ENCODE measurements at regions of chr7 and their contacts with region 1.

Region 1: DNA sequence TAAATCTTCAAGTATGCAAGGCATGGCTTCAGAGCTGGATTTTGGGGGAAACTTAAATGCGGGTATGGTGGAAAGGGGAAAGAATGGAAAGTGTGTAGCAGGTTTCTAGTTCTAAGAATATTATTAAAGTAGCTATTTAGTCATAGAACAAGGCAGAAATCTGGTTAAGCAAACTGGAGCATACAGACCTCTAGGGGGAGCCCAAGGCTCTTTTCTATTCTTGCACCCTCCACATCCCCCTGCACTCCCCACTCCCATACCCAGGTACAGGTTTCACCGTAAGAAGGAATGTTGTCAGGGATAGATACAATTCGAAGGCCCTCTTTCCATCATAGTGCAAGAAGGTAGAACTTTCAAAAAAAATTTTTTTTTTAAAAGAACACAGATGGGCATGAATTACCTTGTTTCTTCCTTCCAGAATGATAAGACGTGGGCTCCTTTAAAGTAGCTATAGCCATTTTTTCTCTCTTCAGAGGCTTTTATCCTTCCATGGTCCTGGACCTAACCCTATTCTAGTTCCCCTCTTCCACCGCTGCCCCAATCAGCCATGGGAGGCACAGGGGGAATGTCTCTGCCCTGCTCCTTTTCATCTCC is 41.5 kb upstream of the SMIM30 start:
- DNase-seq: peak; percentile 3
- H3K4me3 ChIP-seq: no peak overlapping the region
- H3K27ac ChIP-seq: no peak overlapping the region
- H3K27me3 ChIP-seq: no peaks in the 10 kb centered on the region
- CTCF ChIP-seq: peak; percentile 91

Region 2: DNA sequence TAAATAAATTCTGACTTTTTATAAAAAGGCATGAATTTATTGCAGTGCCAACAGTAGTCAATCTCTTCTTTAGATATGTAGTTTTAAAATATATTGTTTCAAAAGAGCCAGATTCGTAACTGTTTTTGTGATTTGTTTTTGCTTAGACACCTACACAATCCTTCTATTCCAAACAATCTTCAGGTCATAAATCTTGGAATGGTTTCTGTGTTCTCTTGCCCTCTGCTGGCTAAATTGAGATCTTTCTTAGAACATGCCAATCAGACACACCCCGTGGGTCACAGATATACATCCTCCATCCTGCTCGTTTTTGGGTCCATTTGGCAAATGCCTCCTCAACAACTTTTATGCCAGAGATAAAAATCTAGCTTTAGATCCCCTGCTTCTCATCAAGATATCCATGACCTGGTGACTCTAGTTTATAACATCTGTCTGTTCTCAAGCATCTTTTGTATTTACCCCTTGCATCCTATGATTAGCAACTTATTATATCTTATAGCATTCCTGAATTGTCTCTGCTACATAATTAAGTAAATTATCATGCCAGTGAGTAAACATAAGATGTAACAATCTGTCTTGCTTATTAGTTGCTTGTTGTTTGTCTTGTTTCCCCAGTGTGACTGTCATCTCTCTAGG is 744.9 kb before region 1 on chr7:
- CTCF ChIA-PET with region 1: no interaction called
- POLR2A ChIA-PET with region 1: no interaction called
- DNase-seq: no peak
- H3K4me3 ChIP-seq: no peak overlapping the region
- H3K27ac ChIP-seq: no peak overlapping the region
- H3K27me3 ChIP-seq: peaks cover 7% of the 10 kb centered on the region
- CTCF ChIP-seq: peak; percentile 64

Region 3: GRCh38 chr7:112908086-112908485 is 251.8 kb before region 1 on chr7:
- CTCF ChIA-PET with region 1: no interaction called
- POLR2A ChIA-PET with region 1: no interaction called
- DNase-seq: no peak
- H3K4me3 ChIP-seq: no peak overlapping the region
- H3K27ac ChIP-seq: no peak overlapping the region
- H3K27me3 ChIP-seq: no peaks in the 10 kb centered on the region
- CTCF ChIP-seq: no peak

Region 4: DNA sequence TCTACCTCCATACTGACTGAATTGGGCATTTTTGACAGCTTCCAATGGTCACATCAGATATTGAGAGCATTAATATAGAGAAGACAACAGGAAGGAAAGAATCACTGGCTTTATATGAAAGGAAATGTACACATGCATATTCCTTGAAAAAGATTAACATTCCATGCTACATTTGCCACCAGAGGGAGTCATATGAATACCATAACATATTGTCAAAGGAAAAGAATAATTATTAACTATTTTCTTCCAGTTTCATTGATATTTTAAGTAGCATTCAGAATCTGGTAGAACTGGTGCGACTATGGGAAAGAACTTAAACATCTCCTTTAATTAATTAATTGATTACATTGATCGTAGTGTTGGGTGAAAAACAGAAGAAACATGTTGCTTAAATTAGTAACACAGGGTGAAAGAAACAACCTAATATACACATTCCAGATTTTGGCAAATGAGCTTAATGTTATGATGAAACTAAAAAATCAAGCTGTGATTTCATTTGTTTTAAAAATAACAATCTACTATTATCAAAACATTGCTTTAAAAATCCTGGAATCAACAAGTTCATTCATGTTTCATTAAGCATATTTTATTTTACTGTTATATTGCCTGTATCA is 144.7 kb before region 1 on chr7:
- CTCF ChIA-PET with region 1: interaction called, 18 read pairs
- POLR2A ChIA-PET with region 1: no interaction called
- DNase-seq: no peak
- H3K4me3 ChIP-seq: no peak overlapping the region
- H3K27ac ChIP-seq: no peak overlapping the region
- H3K27me3 ChIP-seq: no peaks in the 10 kb centered on the region
- CTCF ChIP-seq: peak; percentile 60

Region 5: DNA sequence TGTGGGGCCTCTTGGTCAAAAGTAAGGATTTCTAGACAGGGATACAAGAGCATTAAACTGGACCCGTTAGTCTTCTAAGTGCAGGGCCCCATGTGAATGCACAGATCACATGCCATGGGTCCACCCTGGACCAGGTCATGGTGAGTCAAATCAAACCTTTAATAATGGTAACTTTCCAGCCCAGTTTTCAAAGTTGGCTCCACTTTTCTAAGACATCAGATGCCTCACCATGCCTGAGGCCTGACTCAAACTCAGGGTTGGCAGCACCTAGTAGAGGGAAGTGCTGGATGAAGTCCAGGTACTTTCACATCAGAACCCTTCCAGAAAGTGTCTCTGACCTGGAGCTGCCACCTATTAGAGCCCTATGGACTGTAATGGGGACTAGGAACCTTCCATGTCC is 31.8 kb before region 1 on chr7:
- CTCF ChIA-PET with region 1: interaction called, 25 read pairs
- POLR2A ChIA-PET with region 1: no interaction called
- DNase-seq: no peak
- H3K4me3 ChIP-seq: no peak overlapping the region
- H3K27ac ChIP-seq: no peak overlapping the region
- H3K27me3 ChIP-seq: no peaks in the 10 kb centered on the region
- CTCF ChIP-seq: no peak

Region 6: DNA sequence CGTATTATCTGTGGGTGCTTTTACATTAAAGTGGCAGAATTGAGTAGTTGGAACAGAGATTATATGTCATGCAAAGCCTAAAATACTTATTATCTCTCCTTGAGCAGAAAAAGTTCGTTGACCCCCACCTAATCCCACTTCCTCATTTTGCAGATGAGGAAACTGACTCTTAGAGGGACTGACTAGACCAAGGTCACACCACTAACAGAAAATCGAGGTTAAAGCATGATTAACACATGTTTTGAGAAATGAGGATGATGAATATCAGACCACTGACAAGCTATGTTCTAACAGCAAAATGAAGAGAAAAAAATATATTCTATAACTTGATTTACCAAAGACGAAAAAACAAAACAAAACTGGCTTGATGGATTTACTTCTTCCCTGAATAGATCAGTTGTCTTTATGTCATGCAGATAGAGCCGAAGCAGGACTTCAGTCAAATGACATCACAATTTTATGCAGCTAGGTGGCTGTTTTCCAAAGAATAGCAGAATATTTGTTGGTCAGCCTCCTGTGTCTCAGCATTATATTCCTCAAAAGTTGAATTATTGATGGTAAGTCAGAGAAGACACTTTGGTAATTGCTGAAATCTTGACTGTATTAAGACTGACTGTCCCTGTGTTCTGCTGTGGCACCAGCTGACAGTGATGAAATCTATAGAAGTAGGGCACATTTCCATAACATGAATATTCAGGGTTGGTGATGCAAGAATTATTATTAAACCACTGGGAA is 17.3 kb before region 1 on chr7:
- CTCF ChIA-PET with region 1: interaction called, 40 read pairs
- POLR2A ChIA-PET with region 1: no interaction called
- DNase-seq: no peak
- H3K4me3 ChIP-seq: no peak overlapping the region
- H3K27ac ChIP-seq: no peak overlapping the region
- H3K27me3 ChIP-seq: no peaks in the 10 kb centered on the region
- CTCF ChIP-seq: no peak

Region 7: DNA sequence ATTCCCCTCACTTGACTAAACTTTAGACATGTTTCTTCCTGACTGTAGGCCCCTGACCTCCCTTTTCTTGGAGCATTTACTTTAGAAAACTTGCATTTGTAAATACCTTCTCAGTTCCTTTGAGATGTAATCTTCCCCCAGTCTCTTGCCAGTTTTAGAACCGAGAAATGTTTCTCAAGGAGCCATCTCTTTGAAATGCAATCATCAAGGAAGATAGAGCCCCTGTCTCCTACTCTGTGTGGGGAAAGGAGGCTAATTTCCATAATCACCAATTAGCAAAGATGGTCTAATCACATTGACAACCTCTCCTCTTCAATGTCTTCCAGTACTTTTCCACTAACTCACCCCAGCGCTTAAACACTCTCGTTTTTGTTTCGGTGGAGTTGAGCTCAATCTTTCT is 28.6 kb after region 1 on chr7:
- CTCF ChIA-PET with region 1: interaction called, 40 read pairs
- POLR2A ChIA-PET with region 1: no interaction called
- DNase-seq: no peak
- H3K4me3 ChIP-seq: no peak overlapping the region
- H3K27ac ChIP-seq: no peak overlapping the region
- H3K27me3 ChIP-seq: no peaks in the 10 kb centered on the region
- CTCF ChIP-seq: no peak

Region 8: GRCh38 chr7:113247198-113247597 is 87.4 kb after region 1 on chr7:
- CTCF ChIA-PET with region 1: no interaction called
- POLR2A ChIA-PET with region 1: no interaction called
- DNase-seq: no peak
- H3K4me3 ChIP-seq: no peak overlapping the region
- H3K27ac ChIP-seq: no peak overlapping the region
- H3K27me3 ChIP-seq: no peaks in the 10 kb centered on the region
- CTCF ChIP-seq: no peak

Region 9: GRCh38 chr7:113289140-113289740 is 129.4 kb after region 1 on chr7:
- CTCF ChIA-PET with region 1: interaction called, 46 read pairs
- POLR2A ChIA-PET with region 1: no interaction called
- DNase-seq: no peak
- H3K4me3 ChIP-seq: no peak overlapping the region
- H3K27ac ChIP-seq: no peak overlapping the region
- H3K27me3 ChIP-seq: no peaks in the 10 kb centered on the region
- CTCF ChIP-seq: peak; percentile 76